H1 (cell line): ENCODE measurements at regions of chr16 and their contacts with region 1.

Region 1: DNA sequence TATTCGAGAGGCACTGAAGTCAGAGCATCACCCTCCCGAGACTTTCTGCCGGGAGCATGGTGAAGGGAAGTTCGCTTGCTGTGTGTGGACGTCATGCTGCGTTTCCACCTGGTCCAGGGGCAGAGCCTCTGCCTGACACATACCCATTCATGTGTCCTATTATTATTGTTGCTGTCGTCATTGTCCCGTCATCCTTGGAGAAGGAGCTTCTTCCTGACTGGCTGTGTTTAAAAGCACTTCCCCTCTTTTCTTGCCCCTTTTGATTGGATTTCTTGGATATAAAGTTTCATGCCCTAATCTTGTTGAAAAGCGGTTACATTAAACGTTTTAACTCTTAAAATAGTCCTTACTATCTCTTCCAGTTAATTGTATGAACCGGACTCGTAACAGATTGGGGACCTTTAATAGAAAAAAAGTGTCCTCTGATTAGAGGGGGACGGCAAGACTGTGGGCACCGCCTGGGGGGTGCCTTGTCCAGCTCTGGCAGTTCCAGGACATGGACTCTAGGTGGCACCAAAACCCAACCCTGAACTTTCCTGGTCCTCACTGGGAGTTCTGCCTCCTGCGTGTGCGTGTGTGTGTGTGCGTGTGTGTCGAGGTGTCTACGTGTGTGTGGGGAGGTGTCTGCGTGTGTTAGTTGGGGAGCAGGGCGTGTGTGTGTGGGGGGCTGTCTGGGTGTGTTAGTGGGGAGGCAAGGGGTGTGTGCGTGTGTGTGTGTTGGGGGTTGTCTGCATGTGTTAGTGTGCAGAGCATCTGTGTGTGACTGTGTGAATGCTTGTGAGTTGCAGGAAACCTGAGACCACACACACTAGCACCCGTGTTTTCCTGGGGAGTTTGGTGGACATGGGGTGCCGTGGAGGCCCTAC is 133.3 kb upstream of the CIBAR2 start:
- DNase-seq: peak in 1 of 2 experiments; percentile 82
- H3K4me3 ChIP-seq: no peak overlapping the region
- H3K27ac ChIP-seq: no peak overlapping the region
- H3K4me1 ChIP-seq: peaks cover 0 to 32% (median 10%) of the 10 kb centered on the region in 4 experiments; a peak in 5 of 7 replicates
- H3K27me3 ChIP-seq: no peaks in the 10 kb centered on the region
- CTCF ChIP-seq: peak; percentile 80 to 91 (median 85)
- EP300 ChIP-seq: no peak
- POLR2A ChIP-seq: no peak
- RAD21 ChIP-seq: peak; percentile 77 to 81

Region 2: GRCh38 chr16:84959045-84959576 is 286.4 kb before region 1 on chr16:
- CTCF ChIA-PET with region 1: no interaction called
- POLR2A ChIA-PET with region 1: no interaction called
- DNase-seq: no peak
- H3K4me3 ChIP-seq: no peak overlapping the region
- H3K27ac ChIP-seq: no peak overlapping the region
- H3K4me1 ChIP-seq: 0 out of 7 replicates have a peak, but pooled peaks cover 0 to 2% (median 0%) of the 10 kb centered on the region in 4 experiments
- H3K27me3 ChIP-seq: no peaks in the 10 kb centered on the region
- CTCF ChIP-seq: peak; percentile 54 to 95 (median 65)
- EP300 ChIP-seq: no peak
- POLR2A ChIP-seq: no peak
- RAD21 ChIP-seq: peak in 1 of 2 experiments; percentile 28; a peak in 1 of 4 replicates

Region 3: DNA sequence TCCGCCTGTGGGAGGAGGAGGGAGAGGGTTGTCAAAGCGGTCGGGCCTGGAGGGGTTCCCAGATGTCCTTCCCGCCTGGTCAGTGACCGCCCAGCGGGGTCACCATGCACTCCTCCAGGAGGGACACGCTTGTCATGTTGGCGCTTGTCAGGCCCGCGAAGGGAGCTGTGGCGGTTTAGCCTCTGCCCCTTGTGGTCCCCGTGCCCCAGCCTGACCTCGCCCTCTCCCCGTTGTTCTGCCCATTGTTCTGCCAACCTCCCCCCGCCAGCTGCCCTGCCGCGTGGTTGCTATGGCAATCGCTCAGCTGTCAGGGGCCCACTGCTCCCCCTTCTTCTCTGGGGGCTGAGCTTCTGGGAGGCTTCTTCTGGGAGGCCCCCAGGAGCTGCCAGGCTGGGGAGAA is 13.1 kb after region 1 on chr16:
- CTCF ChIA-PET with region 1: interaction called, 371 read pairs
- POLR2A ChIA-PET with region 1: interaction called, 5 read pairs
- DNase-seq: no peak
- H3K4me3 ChIP-seq: no peak overlapping the region
- H3K27ac ChIP-seq: no peak overlapping the region
- H3K4me1 ChIP-seq: peaks cover 0 to 8% (median 3%) of the 10 kb centered on the region in 4 experiments; a peak in 5 of 7 replicates
- H3K27me3 ChIP-seq: no peaks in the 10 kb centered on the region
- CTCF ChIP-seq: no peak
- EP300 ChIP-seq: no peak
- POLR2A ChIP-seq: no peak
- RAD21 ChIP-seq: no peak

Region 4: GRCh38 chr16:85270374-85270773 is 24.8 kb after region 1 on chr16:
- CTCF ChIA-PET with region 1: interaction called, 23 read pairs
- POLR2A ChIA-PET with region 1: no interaction called
- DNase-seq: no peak
- H3K4me3 ChIP-seq: no peak overlapping the region
- H3K27ac ChIP-seq: no peak overlapping the region
- H3K4me1 ChIP-seq: no peaks in the 10 kb centered on the region; a peak in 4 of 7 replicates
- H3K27me3 ChIP-seq: peaks cover 0 to 3% (median 0%) of the 10 kb centered on the region in 4 experiments; a peak in 2 of 7 replicates
- CTCF ChIP-seq: no peak
- EP300 ChIP-seq: no peak
- POLR2A ChIP-seq: no peak
- RAD21 ChIP-seq: no peak

Region 5: DNA sequence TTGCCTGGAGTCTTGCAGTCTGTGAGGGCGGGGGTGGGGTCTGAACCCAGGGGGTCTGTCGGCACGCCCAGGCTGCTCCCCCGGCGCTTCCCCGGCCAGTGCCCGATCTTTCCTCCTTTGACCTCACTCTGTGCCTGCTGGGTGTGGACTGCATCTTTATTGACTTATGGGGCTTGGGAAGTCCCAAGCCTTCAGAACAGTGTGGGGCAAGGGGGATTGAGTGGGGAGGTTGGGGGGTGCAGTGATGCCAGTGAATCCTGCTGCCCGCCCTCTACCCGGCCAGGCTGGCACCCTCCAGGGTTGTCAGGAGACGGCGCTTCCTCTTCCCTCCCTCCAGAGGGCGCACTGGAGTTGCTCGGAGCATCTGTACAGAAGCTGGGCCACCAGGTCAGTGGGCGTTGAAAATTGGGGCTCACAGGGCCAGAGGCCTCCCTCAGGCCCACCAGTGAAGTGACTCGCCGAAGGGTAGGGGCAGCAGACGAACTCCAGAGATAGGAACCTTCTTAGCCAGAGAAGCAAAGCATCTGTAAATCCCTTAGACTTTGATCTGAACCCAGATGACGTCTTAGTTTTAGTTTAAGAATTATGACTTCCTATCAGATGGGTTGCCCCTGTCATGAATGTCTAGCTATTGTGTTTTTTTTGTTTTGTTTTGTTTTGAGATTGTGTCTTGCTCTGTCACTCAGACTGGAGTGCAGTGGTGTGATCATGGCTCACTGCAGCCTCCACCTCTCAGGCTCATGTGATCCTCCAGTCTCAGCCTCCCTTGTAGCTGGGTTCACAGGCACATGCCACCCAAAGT is 51.5 kb after region 1 on chr16:
- CTCF ChIA-PET with region 1: interaction called, 11 read pairs
- POLR2A ChIA-PET with region 1: no interaction called
- DNase-seq: peak in 1 of 2 experiments; percentile 87
- H3K4me3 ChIP-seq: no peak overlapping the region
- H3K27ac ChIP-seq: no peak overlapping the region
- H3K4me1 ChIP-seq: no peaks in the 10 kb centered on the region
- H3K27me3 ChIP-seq: no peaks in the 10 kb centered on the region; a peak in 1 of 7 replicates
- CTCF ChIP-seq: peak; percentile 91 to 93 (median 91)
- EP300 ChIP-seq: no peak
- POLR2A ChIP-seq: no peak
- RAD21 ChIP-seq: peak; percentile 49 to 68; a peak in 3 of 4 replicates